ENCODE measurements at regions of chr18 and their contacts with region 1.

Region 1: GRCh38 chr18:79108549-79109215 is 39.5 kb downstream of the ATP9B start:
- DNase-seq: no peak
- CTCF ChIP-seq: no peak

Region 2: DNA sequence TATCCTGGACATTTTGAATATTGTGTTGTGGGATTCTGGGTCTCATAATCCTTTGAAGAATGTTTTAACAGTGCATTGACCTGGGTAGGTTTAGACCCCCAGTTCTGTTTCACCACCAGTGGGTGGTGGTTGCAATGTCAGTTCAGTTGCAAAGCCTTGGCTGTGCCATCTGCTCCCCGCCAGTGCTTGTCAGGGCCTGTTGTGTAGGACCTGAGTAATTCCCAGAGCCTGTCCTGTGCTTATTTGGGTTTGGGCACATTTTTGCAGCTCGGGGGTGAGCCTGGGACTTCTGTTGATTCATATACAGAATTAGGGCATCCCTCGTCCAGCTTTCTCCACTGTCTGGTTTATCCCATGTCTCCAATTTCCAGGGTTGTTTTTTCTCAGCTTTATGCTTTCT is 14.7 kb before region 1 on chr18:
- CTCF ChIA-PET with region 1: interaction called, 27 read pairs
- POLR2A ChIA-PET with region 1: no interaction called
- DNase-seq: no peak
- CTCF ChIP-seq: no peak